Left cardiac atrium (tissue), 4 donors: ENCODE measurements at regions of chr17 and their contacts with region 1.

Region 1: GRCh38 chr17:16415031-16415924 is at the start of gene TRPV2:
- DNase-seq: peak; percentile 66
- ATAC-seq: peak; percentile 37 to 49
- total RNA-seq, gene TRPV2: 14.3 to 21.1 TPM

Region 2: GRCh38 chr17:16363749-16364536 is 51.3 kb before region 1 on chr17:
- intact Hi-C with region 1: loop called in 1 of 2 experiments (anchors 10 kb)
- DNase-seq: peak; percentile 79
- ATAC-seq: peak; percentile 89 to 90